CD8-positive, alpha-beta memory T cell (primary cell): ENCODE measurements at regions of chr2 and their contacts with region 1.

Region 1: DNA sequence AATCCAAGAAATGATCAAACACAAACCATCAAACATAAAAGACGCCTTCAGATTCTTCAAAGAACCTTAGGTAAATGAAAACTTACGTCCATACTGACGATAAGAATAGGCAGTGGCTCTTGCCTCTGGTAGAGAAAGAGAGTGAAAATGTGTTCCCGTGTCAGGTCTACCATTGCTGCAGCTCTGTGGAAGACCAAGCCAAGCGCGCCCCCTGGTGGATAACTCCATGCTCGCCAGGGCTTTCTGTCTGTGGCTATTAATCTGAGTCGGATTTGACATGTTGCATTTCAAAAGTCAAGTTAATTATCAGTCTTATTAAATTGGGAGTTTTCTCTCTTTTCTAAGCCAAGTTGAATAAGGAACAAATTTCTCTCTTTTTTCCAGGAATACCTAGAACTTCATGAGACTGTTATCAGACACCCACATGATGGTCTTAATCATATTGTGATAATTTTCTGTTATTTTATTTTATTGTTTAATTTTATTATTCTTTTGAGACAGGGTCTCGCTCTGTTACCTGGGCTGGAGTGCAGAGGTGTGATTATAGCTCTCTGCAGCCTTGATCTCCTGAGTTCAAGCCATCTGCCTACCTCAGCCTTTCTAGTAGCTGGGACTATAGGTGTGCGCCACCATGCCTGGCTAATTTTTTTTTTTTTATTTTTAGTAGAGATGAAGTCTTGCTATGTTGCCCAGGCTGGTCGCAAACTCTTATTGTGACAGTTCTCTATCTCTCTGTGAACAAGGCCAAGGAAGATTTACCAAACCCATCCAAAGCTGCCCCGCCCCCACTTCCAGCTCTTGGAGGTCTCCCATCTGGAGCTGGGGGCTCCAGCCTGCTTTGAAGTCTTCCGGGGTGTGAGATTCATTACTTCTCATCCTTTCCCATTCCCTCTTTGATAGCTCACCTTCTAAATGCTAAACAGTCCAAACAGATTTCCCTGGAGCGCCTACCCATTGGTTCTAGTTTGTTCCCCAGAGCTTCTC is 15.8 kb upstream of the ZAP70 start:
- DNase-seq: peak; percentile 78 to 93 (median 86)
- H3K4me3 ChIP-seq: no peak overlapping the region
- H3K4me3 Mint-ChIP-seq: peak overlapping the region in 1 of 7 donors; percentile 15
- H3K27ac ChIP-seq: no peak overlapping the region
- H3K27ac Mint-ChIP-seq: peak overlapping the region in 4 of 8 donors; percentile 34 to 91 (median 70)
- H3K4me1 ChIP-seq: peaks cover 4% of the 10 kb centered on the region
- H3K4me1 Mint-ChIP-seq: peaks cover 6 to 11% (median 6%) of the 10 kb centered on the region in 3 donors
- H3K27me3 ChIP-seq: no peaks in the 10 kb centered on the region
- H3K27me3 Mint-ChIP-seq: peaks cover 0 to 6% of the 10 kb centered on the region in 2 donors

Region 2: GRCh38 chr2:97645695-97646629 is 51.6 kb before region 1 on chr2 and contains the start of gene COX5B:
- CTCF ChIA-PET with region 1: interaction called, 13 read pairs
- POLR2A ChIA-PET with region 1: interaction called, 3 read pairs
- DNase-seq: peak; percentile 97 to 99 (median 98)
- H3K4me3 ChIP-seq: peak within 1 kb of the TSS; percentile 86
- H3K4me3 Mint-ChIP-seq: peak within 1 kb of the TSS; percentile 93 to 96 (median 95)
- H3K27ac ChIP-seq: peak within 1 kb of the TSS; percentile 90
- H3K27ac Mint-ChIP-seq: peak within 1 kb of the TSS; percentile 90 to 98 (median 98)
- H3K4me1 ChIP-seq: peaks cover 18% of the 10 kb centered on the region
- H3K4me1 Mint-ChIP-seq: peaks cover 16 to 25% (median 21%) of the 10 kb centered on the region in 3 donors
- H3K27me3 ChIP-seq: no peaks in the 10 kb centered on the region
- H3K27me3 Mint-ChIP-seq: peaks cover 0 to 2% of the 10 kb centered on the region in 2 donors
- total RNA-seq, gene COX5B: 197 to 205 TPM

Region 3: DNA sequence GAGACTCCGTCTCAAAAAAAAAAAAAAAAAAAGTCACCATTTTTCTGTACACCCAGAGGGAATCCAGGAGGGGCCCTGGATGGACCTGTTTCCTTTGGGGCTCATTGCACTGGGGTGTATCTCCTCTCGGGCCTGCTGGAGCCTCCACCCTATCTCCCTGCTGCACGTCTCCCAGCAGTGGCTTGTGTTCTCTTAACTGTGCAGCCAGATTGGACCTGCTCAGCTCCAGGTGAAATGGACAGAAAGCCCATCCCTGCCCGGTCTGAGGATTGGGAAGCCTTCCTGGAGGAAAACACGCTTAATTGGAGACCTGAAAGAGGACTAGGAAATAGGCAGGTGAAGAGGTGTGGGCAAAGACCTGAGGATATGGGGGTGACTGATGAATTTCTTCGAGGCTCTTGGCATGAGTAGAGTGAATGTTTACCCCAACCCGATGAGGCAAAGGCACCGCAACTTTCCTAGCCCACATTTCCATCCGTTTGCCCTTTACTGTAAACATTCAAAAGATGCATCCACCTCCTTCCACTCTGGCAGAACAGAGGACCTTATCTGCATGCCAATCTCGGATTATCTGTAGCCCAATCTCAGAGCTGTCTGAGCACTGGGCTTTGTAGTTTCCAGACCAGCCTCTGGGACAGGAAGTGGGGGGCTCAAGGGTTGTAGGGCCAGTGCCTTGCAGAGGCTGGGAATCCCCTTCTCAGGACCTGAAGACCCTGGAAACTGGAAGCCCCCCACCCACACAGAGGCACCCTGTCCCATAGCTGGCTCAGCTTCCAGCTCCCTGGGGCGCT is 13.2 kb after region 1 on chr2:
- CTCF ChIA-PET with region 1: interaction called, 48 read pairs
- POLR2A ChIA-PET with region 1: interaction called, 3 read pairs
- DNase-seq: peak in 1 of 5 donors; percentile 31
- H3K4me3 ChIP-seq: no peak overlapping the region
- H3K4me3 Mint-ChIP-seq: peak overlapping the region in 2 of 7 donors; percentile 11 to 23
- H3K27ac ChIP-seq: no peak overlapping the region
- H3K27ac Mint-ChIP-seq: peak overlapping the region in 7 of 8 donors; percentile 50 to 99 (median 79)
- H3K4me1 ChIP-seq: peaks cover 44% of the 10 kb centered on the region
- H3K4me1 Mint-ChIP-seq: peaks cover 48 to 59% (median 52%) of the 10 kb centered on the region in 3 donors
- H3K27me3 ChIP-seq: no peaks in the 10 kb centered on the region
- H3K27me3 Mint-ChIP-seq: peaks cover 5 to 7% of the 10 kb centered on the region in 2 donors

Region 4: DNA sequence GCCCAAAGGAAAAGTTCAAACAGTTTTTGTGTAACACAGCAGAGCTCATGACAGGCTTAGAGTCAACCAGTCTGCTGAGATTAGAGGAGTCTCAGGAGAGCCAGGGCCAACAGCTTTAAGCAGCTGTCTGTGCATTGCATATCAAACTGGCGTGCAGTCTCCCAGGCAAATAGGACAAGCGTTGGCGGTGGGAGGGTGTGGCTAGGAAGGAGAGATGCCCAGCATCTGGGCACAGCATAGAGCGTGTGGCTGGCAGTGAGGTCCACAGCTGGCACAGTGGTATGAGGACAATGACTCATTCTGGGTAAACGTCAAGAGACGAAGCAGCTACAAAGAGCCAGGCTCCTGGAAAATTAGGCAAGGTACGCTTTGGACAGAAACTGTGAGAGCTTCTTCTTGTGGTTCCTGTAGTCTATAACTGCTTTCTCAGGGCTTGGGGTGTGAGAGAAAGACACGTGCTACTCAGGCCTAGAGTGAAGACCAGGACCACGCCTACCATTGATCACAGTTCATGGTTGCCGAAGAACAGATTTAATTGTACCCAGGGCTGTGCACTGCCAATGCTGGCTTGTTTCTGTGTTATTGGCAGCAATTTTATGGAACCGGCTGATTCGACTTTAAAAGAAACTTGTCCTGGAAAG is 30.7 kb after region 1 on chr2:
- CTCF ChIA-PET with region 1: interaction called, 12 read pairs
- POLR2A ChIA-PET with region 1: no interaction called
- DNase-seq: no peak
- H3K4me3 ChIP-seq: no peak overlapping the region
- H3K4me3 Mint-ChIP-seq: peak overlapping the region; percentile 5 to 61 (median 49)
- H3K27ac ChIP-seq: no peak overlapping the region
- H3K27ac Mint-ChIP-seq: peak overlapping the region; percentile 76 to 96 (median 88)
- H3K4me1 ChIP-seq: peaks cover 51% of the 10 kb centered on the region
- H3K4me1 Mint-ChIP-seq: peaks cover 71 to 93% (median 76%) of the 10 kb centered on the region in 3 donors
- H3K27me3 ChIP-seq: no peaks in the 10 kb centered on the region
- H3K27me3 Mint-ChIP-seq: no peaks in the 10 kb centered on the region

Region 5: GRCh38 chr2:97759727-97760403 is 62.3 kb after region 1 on chr2:
- CTCF ChIA-PET with region 1: interaction called, 100 read pairs
- POLR2A ChIA-PET with region 1: no interaction called
- DNase-seq: no peak
- H3K4me3 ChIP-seq: no peak overlapping the region
- H3K4me3 Mint-ChIP-seq: peak overlapping the region; percentile 51 to 76 (median 70)
- H3K27ac ChIP-seq: no peak overlapping the region
- H3K27ac Mint-ChIP-seq: peak overlapping the region; percentile 63 to 96 (median 88)
- H3K4me1 ChIP-seq: peaks cover 31% of the 10 kb centered on the region
- H3K4me1 Mint-ChIP-seq: peaks cover 26 to 43% (median 35%) of the 10 kb centered on the region in 3 donors
- H3K27me3 ChIP-seq: no peaks in the 10 kb centered on the region
- H3K27me3 Mint-ChIP-seq: peaks cover 0 to 2% of the 10 kb centered on the region in 2 donors

Region 6: DNA sequence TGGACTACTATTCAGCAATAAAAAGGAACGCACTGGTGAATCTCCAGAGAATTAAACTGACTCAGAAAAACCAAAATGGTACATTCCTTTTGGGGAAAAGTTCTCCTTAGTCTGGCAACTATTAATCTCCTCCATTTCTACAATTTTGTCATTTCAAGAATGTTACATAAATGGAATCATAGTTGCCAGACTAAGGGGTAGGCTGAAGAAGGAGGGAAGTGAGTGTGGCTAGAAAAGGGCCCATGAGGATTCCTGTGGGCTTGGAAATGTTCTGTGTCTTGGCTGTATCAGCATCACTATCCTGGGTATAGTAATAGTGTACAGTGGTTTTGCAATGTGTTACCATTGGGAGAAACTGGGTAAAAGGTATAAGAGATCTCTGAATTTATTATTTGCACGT is 88.3 kb after region 1 on chr2:
- CTCF ChIA-PET with region 1: no interaction called
- POLR2A ChIA-PET with region 1: no interaction called
- DNase-seq: no peak
- H3K4me3 ChIP-seq: no peak overlapping the region
- H3K4me3 Mint-ChIP-seq: no peak overlapping the region
- H3K27ac ChIP-seq: no peak overlapping the region
- H3K27ac Mint-ChIP-seq: peak overlapping the region in 3 of 8 donors; percentile 10 to 31 (median 12)
- H3K4me1 ChIP-seq: no peaks in the 10 kb centered on the region
- H3K4me1 Mint-ChIP-seq: peaks cover 0 to 2% (median 0%) of the 10 kb centered on the region in 3 donors
- H3K27me3 ChIP-seq: no peaks in the 10 kb centered on the region
- H3K27me3 Mint-ChIP-seq: no peaks in the 10 kb centered on the region

Region 7: GRCh38 chr2:97798416-97798815 is 100.9 kb after region 1 on chr2:
- CTCF ChIA-PET with region 1: no interaction called
- POLR2A ChIA-PET with region 1: no interaction called
- DNase-seq: no peak
- H3K4me3 ChIP-seq: no peak overlapping the region
- H3K4me3 Mint-ChIP-seq: no peak overlapping the region
- H3K27ac ChIP-seq: no peak overlapping the region
- H3K27ac Mint-ChIP-seq: no peak overlapping the region
- H3K4me1 ChIP-seq: no peaks in the 10 kb centered on the region
- H3K4me1 Mint-ChIP-seq: no peaks in the 10 kb centered on the region
- H3K27me3 ChIP-seq: no peaks in the 10 kb centered on the region
- H3K27me3 Mint-ChIP-seq: no peaks in the 10 kb centered on the region

Region 8: DNA sequence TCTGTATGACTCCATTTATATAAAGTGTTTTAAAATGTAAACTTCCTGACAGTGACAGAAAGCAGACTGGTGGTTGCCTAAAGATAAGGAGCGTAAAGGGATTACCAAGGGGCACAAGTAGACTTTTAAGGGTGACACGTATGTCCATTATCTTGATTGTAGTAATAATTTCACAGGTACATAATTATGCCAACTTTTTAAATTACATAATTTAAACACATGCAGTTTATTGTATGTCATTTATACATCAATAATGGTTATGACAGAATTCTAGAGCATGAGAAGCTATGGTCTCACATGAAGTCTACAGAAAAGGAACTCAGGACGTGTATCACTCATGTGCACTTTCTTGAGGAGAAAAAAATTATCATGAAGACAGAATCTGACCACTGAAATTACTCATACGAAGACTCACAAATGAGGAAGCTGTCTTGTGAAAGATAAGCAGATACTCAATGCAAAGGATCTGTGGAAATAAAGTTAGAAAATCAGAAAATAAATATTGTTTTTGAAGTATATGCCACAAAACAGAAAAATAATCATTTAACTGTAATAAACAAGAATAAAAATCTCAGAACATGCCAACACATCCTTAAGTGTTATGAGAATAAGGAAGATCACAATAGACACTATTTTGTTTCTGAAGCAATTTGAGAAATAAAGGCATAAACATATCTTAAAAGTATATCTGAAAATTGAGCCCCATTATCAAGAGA is 213.8 kb after region 1 on chr2:
- CTCF ChIA-PET with region 1: no interaction called
- POLR2A ChIA-PET with region 1: no interaction called
- DNase-seq: no peak
- H3K4me3 ChIP-seq: no peak overlapping the region
- H3K4me3 Mint-ChIP-seq: no peak overlapping the region
- H3K27ac ChIP-seq: peak overlapping the region; percentile 2
- H3K27ac Mint-ChIP-seq: no peak overlapping the region
- H3K4me1 ChIP-seq: no peaks in the 10 kb centered on the region
- H3K4me1 Mint-ChIP-seq: peaks cover 30 to 54% (median 52%) of the 10 kb centered on the region in 3 donors
- H3K27me3 ChIP-seq: no peaks in the 10 kb centered on the region
- H3K27me3 Mint-ChIP-seq: no peaks in the 10 kb centered on the region